Heart left ventricle (tissue), 16 donors: ENCODE measurements at regions of chr3 and their contacts with region 1.

Region 1: GRCh38 chr3:182713743-182714517 is 79.4 kb upstream of the ATP11B start:
- DNase-seq: no peak
- ATAC-seq: peak; percentile 52 to 84 (median 78)
- H3K4me3 ChIP-seq: no peak overlapping the region
- H3K27ac ChIP-seq: no peak overlapping the region
- H3K4me1 ChIP-seq: peaks cover 0 to 14% (median 0%) of the 10 kb centered on the region in 12 donors
- H3K27me3 ChIP-seq: no peaks in the 10 kb centered on the region
- CTCF ChIP-seq: peak; percentile 40 to 72 (median 61)
- POLR2A ChIP-seq: no peak

Region 2: GRCh38 chr3:182782149-182782548 is 68.2 kb after region 1 on chr3:
- intact Hi-C with region 1: loop called in 2 of 10 experiments (anchors 5 to 10 kb)
- DNase-seq: no peak
- ATAC-seq: no peak
- H3K4me3 ChIP-seq: no peak overlapping the region
- H3K27ac ChIP-seq: no peak overlapping the region
- H3K4me1 ChIP-seq: no peaks in the 10 kb centered on the region
- H3K27me3 ChIP-seq: peaks cover 0 to 38% (median 7%) of the 10 kb centered on the region in 9 donors
- CTCF ChIP-seq: no peak
- POLR2A ChIP-seq: no peak

Region 3: GRCh38 chr3:182792901-182793662 is 79.2 kb after region 1 on chr3 and contains the start of gene ATP11B:
- intact Hi-C with region 1: loop called in 6 of 10 experiments (anchors 5 to 10 kb)
- DNase-seq: peak; percentile 78 to 90 (median 79)
- ATAC-seq: peak; percentile 85 to 95 (median 93)
- H3K4me3 ChIP-seq: peak within 1 kb of the TSS; percentile 66 to 100 (median 89)
- H3K27ac ChIP-seq: peak within 1 kb of the TSS; percentile 87 to 97 (median 92)
- H3K4me1 ChIP-seq: peaks cover 0 to 54% (median 15%) of the 10 kb centered on the region in 12 donors
- H3K27me3 ChIP-seq: no peaks in the 10 kb centered on the region
- CTCF ChIP-seq: peak in 2 of 12 donors; percentile 1 to 10
- POLR2A ChIP-seq: peak; percentile 38 to 77
- total RNA-seq, gene ATP11B: 24.7 to 45.6 (median 36.2) TPM

Region 4: GRCh38 chr3:182837855-182838454 is 124.0 kb after region 1 on chr3:
- intact Hi-C with region 1: loop called (anchors 1 to 5 kb)
- DNase-seq: no peak
- ATAC-seq: no peak
- H3K4me3 ChIP-seq: no peak overlapping the region
- H3K27ac ChIP-seq: no peak overlapping the region
- H3K4me1 ChIP-seq: no peaks in the 10 kb centered on the region
- H3K27me3 ChIP-seq: no peaks in the 10 kb centered on the region
- CTCF ChIP-seq: peak in 10 of 12 donors; percentile 29 to 61 (median 50)
- POLR2A ChIP-seq: no peak